Activated B cell treated with CpG ODN at 0.5 μM for 24 hours (primary cell): ENCODE measurements at regions of chr16 and their contacts with region 1.

Region 1: GRCh38 chr16:75647492-75648264 is at the starts of genes KARS1 and TERF2IP:
- DNase-seq: peak; percentile 92
- ATAC-seq: peak; percentile 86
- H3K4me3 Mint-ChIP-seq: peak within 1 kb of the TSS; percentile 100
- H3K27ac Mint-ChIP-seq: peak within 1 kb of the TSS; percentile 98
- H3K4me1 Mint-ChIP-seq: peaks cover 65% of the 10 kb centered on the region
- H3K27me3 Mint-ChIP-seq: no peaks in the 10 kb centered on the region
- CTCF ChIP-seq: no peak
- total RNA-seq, gene KARS1: 166 and 182 TPM in 2 replicates
- total RNA-seq, gene TERF2IP: 52.6 and 52.7 TPM in 2 replicates

Region 2: DNA sequence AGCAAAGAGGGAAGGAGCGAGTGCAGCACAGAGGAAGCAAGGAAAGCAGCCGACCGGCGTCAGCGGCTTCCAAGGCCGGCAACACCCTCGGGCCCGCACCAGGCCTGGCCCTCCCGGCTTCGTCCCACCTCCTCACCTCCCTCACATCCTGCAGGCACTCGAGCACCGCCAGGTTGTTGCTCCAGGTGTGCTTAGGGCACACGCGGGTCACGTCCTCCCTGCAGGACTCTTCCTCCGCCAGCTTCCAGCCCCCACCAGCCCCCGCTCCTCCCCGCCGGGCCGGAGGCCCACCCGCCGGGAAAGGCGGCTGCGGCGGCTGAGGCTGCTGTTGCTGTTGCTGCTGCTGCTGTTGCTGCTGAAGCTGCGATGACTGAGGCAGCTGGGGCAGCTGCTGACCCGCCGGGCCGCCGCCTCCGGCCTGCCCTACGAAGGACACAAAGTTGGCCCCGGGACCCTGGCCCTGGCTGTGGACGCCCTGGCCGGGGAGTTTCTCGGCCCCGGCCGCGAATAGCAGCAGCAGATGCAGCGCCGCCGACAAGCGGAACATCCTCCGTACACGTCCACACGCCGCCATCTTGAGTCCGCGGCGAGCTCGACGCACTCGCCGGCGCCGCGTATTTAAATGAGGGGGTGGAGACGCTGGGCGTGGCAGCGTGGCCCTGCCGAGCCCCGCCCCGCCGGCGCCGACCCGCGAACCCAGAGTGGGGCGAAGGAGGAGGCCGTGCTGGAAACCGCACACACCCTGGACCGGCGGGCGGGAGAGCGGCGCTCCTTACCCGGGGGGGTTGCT is 1041.0 kb before region 1 on chr16 and contains the start of gene GLG1:
- CTCF ChIA-PET with region 1: no interaction called
- POLR2A ChIA-PET with region 1: interaction called, 13 read pairs
- intact Hi-C with region 1: no loop called
- DNase-seq: peak; percentile 94
- ATAC-seq: peak; percentile 96
- H3K4me3 Mint-ChIP-seq: peak within 1 kb of the TSS; percentile 94
- H3K27ac Mint-ChIP-seq: peak within 1 kb of the TSS; percentile 91
- H3K4me1 Mint-ChIP-seq: peaks cover 45% of the 10 kb centered on the region
- H3K27me3 Mint-ChIP-seq: no peaks in the 10 kb centered on the region
- CTCF ChIP-seq: no peak
- total RNA-seq, gene GLG1: 72.7 and 81.4 TPM in 2 replicates

Region 3: GRCh38 chr16:75138636-75139035 is 509.0 kb before region 1 on chr16:
- CTCF ChIA-PET with region 1: no interaction called
- POLR2A ChIA-PET with region 1: interaction called, 18 read pairs
- intact Hi-C with region 1: no loop called
- DNase-seq: no peak
- ATAC-seq: no peak
- H3K4me3 Mint-ChIP-seq: no peak overlapping the region
- H3K27ac Mint-ChIP-seq: no peak overlapping the region
- H3K4me1 Mint-ChIP-seq: peaks cover 8% of the 10 kb centered on the region
- H3K27me3 Mint-ChIP-seq: peaks cover 5% of the 10 kb centered on the region
- CTCF ChIP-seq: no peak

Region 4: GRCh38 chr16:75218256-75219070 is 429.2 kb before region 1 on chr16 and contains the start of gene CTRB1:
- CTCF ChIA-PET with region 1: no interaction called
- POLR2A ChIA-PET with region 1: no interaction called
- intact Hi-C with region 1: loop called (anchors 2 kb)
- DNase-seq: no peak
- ATAC-seq: peak; percentile 67
- H3K4me3 Mint-ChIP-seq: peak within 1 kb of the TSS; percentile 70
- H3K27ac Mint-ChIP-seq: peak within 1 kb of the TSS; percentile 63
- H3K4me1 Mint-ChIP-seq: peaks cover 11% of the 10 kb centered on the region
- H3K27me3 Mint-ChIP-seq: peaks cover 5% of the 10 kb centered on the region
- CTCF ChIP-seq: no peak
- total RNA-seq, gene CTRB1: not detected in 2 replicates

Region 5: GRCh38 chr16:75305364-75306098 is 342.1 kb before region 1 on chr16:
- CTCF ChIA-PET with region 1: no interaction called
- POLR2A ChIA-PET with region 1: no interaction called
- intact Hi-C with region 1: no loop called
- DNase-seq: no peak
- ATAC-seq: peak; percentile 90
- H3K4me3 Mint-ChIP-seq: no peak overlapping the region
- H3K27ac Mint-ChIP-seq: no peak overlapping the region
- H3K4me1 Mint-ChIP-seq: peaks cover 2% of the 10 kb centered on the region
- H3K27me3 Mint-ChIP-seq: peaks cover 2% of the 10 kb centered on the region
- CTCF ChIP-seq: no peak

Region 6: GRCh38 chr16:75519881-75520280 is 127.8 kb before region 1 on chr16:
- CTCF ChIA-PET with region 1: interaction called, 11 read pairs
- POLR2A ChIA-PET with region 1: interaction called, 21 read pairs
- intact Hi-C with region 1: loop called (anchors 1 kb)
- DNase-seq: no peak
- ATAC-seq: no peak
- H3K4me3 Mint-ChIP-seq: no peak overlapping the region
- H3K27ac Mint-ChIP-seq: no peak overlapping the region
- H3K4me1 Mint-ChIP-seq: peaks cover 13% of the 10 kb centered on the region
- H3K27me3 Mint-ChIP-seq: no peaks in the 10 kb centered on the region
- CTCF ChIP-seq: no peak

Region 7: GRCh38 chr16:75584108-75584507 is 63.6 kb before region 1 on chr16:
- CTCF ChIA-PET with region 1: no interaction called
- POLR2A ChIA-PET with region 1: interaction called, 11 read pairs
- intact Hi-C with region 1: no loop called
- DNase-seq: no peak
- ATAC-seq: peak; percentile 91
- H3K4me3 Mint-ChIP-seq: peak overlapping the region; percentile 19
- H3K27ac Mint-ChIP-seq: peak overlapping the region; percentile 65
- H3K4me1 Mint-ChIP-seq: peaks cover 54% of the 10 kb centered on the region
- H3K27me3 Mint-ChIP-seq: no peaks in the 10 kb centered on the region
- CTCF ChIP-seq: no peak

Region 8: DNA sequence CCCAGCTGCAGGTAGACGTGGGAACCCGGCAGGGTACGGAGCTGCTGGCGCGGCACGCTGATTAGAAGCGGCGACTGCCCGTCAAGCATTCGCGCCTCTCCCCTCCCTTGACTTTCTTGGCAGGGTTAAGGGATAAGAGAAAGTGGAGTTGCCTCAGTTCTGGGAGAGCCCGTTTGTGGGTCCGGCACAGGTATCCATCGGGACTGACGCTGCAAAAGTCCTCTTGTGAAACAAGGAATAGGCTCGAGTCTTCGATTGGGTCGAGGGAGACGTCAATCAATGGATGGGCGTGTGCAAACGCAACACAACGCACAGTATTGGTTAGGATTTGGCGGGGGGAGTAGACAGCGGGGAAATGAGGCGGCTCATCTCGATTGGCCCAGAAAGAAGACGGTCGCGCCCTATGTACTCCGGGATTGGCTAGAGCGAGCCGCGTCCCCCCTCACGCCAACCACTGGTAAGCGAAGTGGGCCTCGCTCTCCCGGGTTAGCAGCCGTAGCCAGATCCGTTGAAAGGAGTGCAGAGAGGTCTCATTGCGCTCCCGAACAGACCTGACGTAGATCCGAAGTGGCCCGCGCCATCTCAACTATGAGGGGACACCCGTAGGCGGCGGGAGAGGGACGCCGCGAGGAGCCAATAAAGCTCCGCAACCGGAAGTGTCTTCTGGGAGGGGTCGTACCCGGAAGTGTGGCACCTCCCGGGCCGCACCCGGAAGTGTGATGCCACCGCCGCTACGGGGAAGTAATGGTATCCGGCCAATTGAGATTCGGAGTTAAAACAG is 1543.0 kb after region 1 on chr16 and contains the start of gene MON1B:
- CTCF ChIA-PET with region 1: no interaction called
- POLR2A ChIA-PET with region 1: interaction called, 5 read pairs
- intact Hi-C with region 1: loop called (anchors 1 kb)
- DNase-seq: peak; percentile 83
- ATAC-seq: peak; percentile 96
- H3K4me3 Mint-ChIP-seq: peak within 1 kb of the TSS; percentile 99
- H3K27ac Mint-ChIP-seq: peak within 1 kb of the TSS; percentile 100
- H3K4me1 Mint-ChIP-seq: peaks cover 43% of the 10 kb centered on the region
- H3K27me3 Mint-ChIP-seq: no peaks in the 10 kb centered on the region
- CTCF ChIP-seq: no peak
- total RNA-seq, gene MON1B: 70.7 and 73.2 TPM in 2 replicates